CD4-positive, alpha-beta memory T cell (primary cell): ENCODE measurements at regions of chr6 and their contacts with region 1.

Region 1: DNA sequence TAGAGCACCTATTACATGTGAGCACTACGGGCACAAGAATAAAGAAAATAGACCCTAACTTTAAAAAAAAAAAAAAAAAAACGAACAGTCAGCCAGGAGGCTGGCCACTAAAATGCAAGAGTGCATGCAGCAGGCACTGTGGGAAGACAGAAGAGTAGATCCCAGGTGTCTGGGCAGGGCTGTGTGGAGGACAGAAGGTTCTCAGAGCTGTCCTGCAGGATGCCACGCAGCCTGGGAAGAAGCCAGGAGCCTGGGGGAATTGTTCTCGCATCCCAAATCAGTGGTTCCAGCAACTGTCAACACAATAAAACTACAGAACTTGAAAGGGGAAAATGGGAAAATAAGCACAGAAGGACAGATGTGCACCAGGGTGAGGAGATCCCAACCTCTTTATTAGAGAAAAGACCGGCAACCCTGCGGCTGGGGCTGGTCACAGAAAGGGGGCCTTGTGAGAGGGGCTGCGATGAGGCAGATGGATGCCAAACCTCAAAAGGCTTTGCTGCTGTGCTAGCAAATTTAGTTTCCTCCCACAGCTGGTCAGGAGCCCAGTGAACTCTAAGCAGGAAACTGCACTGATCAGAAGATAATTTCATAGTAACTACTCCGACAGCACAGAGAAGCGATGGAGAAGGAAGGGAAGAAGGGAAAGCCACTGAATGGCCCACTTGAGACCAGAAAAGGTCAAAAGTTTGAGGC is 30.9 kb downstream of the MAP3K5 start:
- DNase-seq: peak in 3 of 5 donors; percentile 44 to 52 (median 48)
- H3K4me3 ChIP-seq: peak overlapping the region in 1 of 2 donors; percentile 4
- H3K4me3 Mint-ChIP-seq: peak overlapping the region; percentile 76 to 91 (median 84)
- H3K27ac ChIP-seq: peak overlapping the region; percentile 53
- H3K27ac Mint-ChIP-seq: peak overlapping the region; percentile 77 to 95 (median 92)
- H3K4me1 ChIP-seq: peaks cover 78% of the 10 kb centered on the region
- H3K4me1 Mint-ChIP-seq: peaks cover 62 to 68% (median 67%) of the 10 kb centered on the region in 4 donors
- H3K27me3 ChIP-seq: no peaks in the 10 kb centered on the region
- H3K27me3 Mint-ChIP-seq: no peaks in the 10 kb centered on the region

Region 2: GRCh38 chr6:136723780-136724179 is 37.6 kb before region 1 on chr6:
- CTCF ChIA-PET with region 1: interaction called, 4 read pairs
- POLR2A ChIA-PET with region 1: interaction called, 10 read pairs
- intact Hi-C with region 1: no loop called
- DNase-seq: peak in 4 of 5 donors; percentile 9 to 49 (median 32)
- H3K4me3 ChIP-seq: no peak overlapping the region
- H3K4me3 Mint-ChIP-seq: peak overlapping the region in 5 of 8 donors; percentile 12 to 54 (median 39)
- H3K27ac ChIP-seq: no peak overlapping the region
- H3K27ac Mint-ChIP-seq: peak overlapping the region in 4 of 7 donors; percentile 28 to 54 (median 50)
- H3K4me1 ChIP-seq: peaks cover 37% of the 10 kb centered on the region
- H3K4me1 Mint-ChIP-seq: peaks cover 37 to 61% (median 45%) of the 10 kb centered on the region in 4 donors
- H3K27me3 ChIP-seq: no peaks in the 10 kb centered on the region
- H3K27me3 Mint-ChIP-seq: no peaks in the 10 kb centered on the region

Region 3: DNA sequence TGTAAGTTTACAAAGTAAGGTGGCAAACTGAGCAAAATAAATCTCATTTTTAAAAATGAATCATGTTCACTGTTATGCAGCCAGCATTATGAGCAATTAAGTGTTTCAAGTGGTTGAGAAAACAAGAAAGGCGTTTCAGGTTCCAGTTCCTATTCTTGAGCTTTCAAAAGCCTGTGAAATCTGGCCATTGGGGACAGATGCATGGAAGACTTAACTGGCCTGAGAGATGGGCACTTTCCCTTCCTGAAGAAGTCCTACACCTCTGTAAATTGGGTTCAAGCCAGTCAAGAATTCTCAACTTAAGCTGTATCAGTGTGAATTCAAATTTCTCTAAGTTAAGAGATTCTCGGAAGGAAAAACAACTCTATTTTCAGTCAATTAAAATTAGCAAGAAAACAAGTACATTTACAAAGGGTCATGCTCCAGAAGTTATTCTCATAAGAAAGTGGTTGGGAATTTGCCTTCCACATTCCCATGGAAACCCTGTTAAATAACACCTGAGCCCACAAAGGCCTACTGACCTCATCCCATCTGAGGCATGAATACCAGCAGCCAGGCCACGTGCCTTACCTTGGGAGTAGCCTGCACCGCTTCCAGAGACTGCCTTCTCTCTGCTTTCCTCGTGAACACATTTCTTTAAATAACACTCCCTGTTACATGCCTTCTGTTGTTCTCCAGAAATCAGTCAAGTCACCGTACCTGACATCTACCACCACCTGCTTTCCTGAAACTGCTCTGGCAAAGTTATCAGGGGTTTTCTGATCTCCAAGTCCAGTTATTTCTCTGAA is 11.5 kb after region 1 on chr6:
- CTCF ChIA-PET with region 1: interaction called, 5 read pairs
- POLR2A ChIA-PET with region 1: interaction called, 10 read pairs
- intact Hi-C with region 1: no loop called
- DNase-seq: no peak
- H3K4me3 ChIP-seq: no peak overlapping the region
- H3K4me3 Mint-ChIP-seq: peak overlapping the region in 4 of 8 donors; percentile 41 to 52 (median 46)
- H3K27ac ChIP-seq: no peak overlapping the region
- H3K27ac Mint-ChIP-seq: peak overlapping the region; percentile 23 to 91 (median 74)
- H3K4me1 ChIP-seq: peaks cover 71% of the 10 kb centered on the region
- H3K4me1 Mint-ChIP-seq: peaks cover 52 to 71% (median 60%) of the 10 kb centered on the region in 4 donors
- H3K27me3 ChIP-seq: no peaks in the 10 kb centered on the region
- H3K27me3 Mint-ChIP-seq: no peaks in the 10 kb centered on the region

Region 4: DNA sequence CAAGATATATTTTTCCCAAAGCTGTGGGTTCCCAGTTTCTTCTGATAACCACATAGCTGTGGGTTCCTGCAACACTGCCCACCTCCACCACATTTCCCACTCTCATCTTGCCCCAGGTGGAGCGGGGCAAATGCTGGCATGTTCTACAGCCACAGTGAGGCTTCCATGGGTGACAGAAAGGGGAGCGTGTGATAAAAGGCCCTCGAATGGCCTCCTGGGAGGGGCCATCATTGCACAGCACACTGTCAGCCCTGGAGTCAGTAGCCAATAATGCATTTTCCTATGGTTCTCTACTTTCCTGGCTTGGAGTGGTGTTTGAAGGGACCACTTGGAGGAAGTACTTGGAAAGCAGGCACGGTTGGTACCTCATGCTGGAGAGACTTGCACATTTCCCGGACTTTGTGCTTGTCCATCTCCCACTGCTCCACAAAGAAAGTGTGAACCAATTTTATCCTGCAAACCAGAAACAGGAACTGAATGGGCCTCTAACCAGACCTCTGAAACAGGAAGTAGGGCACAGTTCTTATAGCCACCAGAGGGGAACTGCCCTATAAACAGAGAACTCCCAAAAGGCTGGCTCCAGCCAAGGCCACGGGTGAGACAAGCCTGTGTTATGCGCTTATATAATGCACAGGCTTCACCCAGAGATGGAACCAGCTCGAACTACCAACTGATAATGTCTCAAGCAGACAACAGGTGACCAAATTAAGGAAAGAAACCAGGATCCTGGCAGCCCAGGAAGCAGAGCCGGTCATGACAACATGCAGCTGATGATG is 22.3 kb after region 1 on chr6:
- CTCF ChIA-PET with region 1: interaction called, 228 read pairs
- POLR2A ChIA-PET with region 1: interaction called, 323 read pairs
- intact Hi-C with region 1: loop called (anchors 1 kb)
- DNase-seq: peak in 1 of 5 donors; percentile 49
- H3K4me3 ChIP-seq: no peak overlapping the region
- H3K4me3 Mint-ChIP-seq: peak overlapping the region; percentile 60 to 95 (median 91)
- H3K27ac ChIP-seq: no peak overlapping the region
- H3K27ac Mint-ChIP-seq: peak overlapping the region; percentile 55 to 98 (median 89)
- H3K4me1 ChIP-seq: peaks cover 90% of the 10 kb centered on the region
- H3K4me1 Mint-ChIP-seq: peaks cover 62 to 87% (median 74%) of the 10 kb centered on the region in 4 donors
- H3K27me3 ChIP-seq: no peaks in the 10 kb centered on the region
- H3K27me3 Mint-ChIP-seq: no peaks in the 10 kb centered on the region

Region 5: DNA sequence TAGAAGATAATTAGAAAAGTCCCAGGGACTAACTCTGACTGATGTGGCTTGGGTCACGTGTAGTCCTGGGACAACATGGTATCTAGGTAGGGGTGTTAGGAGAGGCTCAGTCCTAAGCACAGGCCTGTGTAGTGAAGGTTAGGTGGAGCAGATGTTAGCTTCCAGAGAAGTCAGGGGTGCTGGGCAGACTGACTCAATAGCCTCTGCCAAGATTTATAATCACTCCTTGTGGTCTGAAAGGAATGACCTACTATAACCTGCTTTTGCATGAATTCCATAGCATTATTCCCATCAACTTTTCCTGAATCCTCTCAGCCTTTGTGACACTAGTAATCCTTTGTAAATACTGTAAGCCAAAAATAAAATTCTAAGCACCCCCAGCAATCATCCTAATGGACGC is 50.8 kb after region 1 on chr6:
- CTCF ChIA-PET with region 1: no interaction called
- POLR2A ChIA-PET with region 1: no interaction called
- intact Hi-C with region 1: no loop called
- DNase-seq: no peak
- H3K4me3 ChIP-seq: no peak overlapping the region
- H3K4me3 Mint-ChIP-seq: no peak overlapping the region
- H3K27ac ChIP-seq: no peak overlapping the region
- H3K27ac Mint-ChIP-seq: no peak overlapping the region
- H3K4me1 ChIP-seq: no peaks in the 10 kb centered on the region
- H3K4me1 Mint-ChIP-seq: no peaks in the 10 kb centered on the region
- H3K27me3 ChIP-seq: no peaks in the 10 kb centered on the region
- H3K27me3 Mint-ChIP-seq: peaks cover 1 to 2% of the 10 kb centered on the region in 2 donors

Region 6: GRCh38 chr6:137112067-137112355 is 350.6 kb after region 1 on chr6:
- CTCF ChIA-PET with region 1: no interaction called
- POLR2A ChIA-PET with region 1: no interaction called
- intact Hi-C with region 1: no loop called
- DNase-seq: no peak
- H3K4me3 ChIP-seq: no peak overlapping the region
- H3K4me3 Mint-ChIP-seq: no peak overlapping the region
- H3K27ac ChIP-seq: no peak overlapping the region
- H3K27ac Mint-ChIP-seq: no peak overlapping the region
- H3K4me1 ChIP-seq: no peaks in the 10 kb centered on the region
- H3K4me1 Mint-ChIP-seq: peaks cover 0 to 9% (median 4%) of the 10 kb centered on the region in 4 donors
- H3K27me3 ChIP-seq: no peaks in the 10 kb centered on the region
- H3K27me3 Mint-ChIP-seq: peaks cover 0 to 2% of the 10 kb centered on the region in 2 donors